ENCODE measurements at regions of chr10 and their contacts with region 1.

Region 1: GRCh38 chr10:93115661-93116383 is 42.1 kb downstream of the CYP26A1 start:
- DNase-seq: peak; percentile 20
- H3K4me3 ChIP-seq: no peak overlapping the region
- H3K27ac ChIP-seq: no peak overlapping the region
- H3K4me1 ChIP-seq: no peaks in the 10 kb centered on the region
- H3K27me3 ChIP-seq: no peaks in the 10 kb centered on the region
- CTCF ChIP-seq: peak; percentile 41 to 59

Region 2: DNA sequence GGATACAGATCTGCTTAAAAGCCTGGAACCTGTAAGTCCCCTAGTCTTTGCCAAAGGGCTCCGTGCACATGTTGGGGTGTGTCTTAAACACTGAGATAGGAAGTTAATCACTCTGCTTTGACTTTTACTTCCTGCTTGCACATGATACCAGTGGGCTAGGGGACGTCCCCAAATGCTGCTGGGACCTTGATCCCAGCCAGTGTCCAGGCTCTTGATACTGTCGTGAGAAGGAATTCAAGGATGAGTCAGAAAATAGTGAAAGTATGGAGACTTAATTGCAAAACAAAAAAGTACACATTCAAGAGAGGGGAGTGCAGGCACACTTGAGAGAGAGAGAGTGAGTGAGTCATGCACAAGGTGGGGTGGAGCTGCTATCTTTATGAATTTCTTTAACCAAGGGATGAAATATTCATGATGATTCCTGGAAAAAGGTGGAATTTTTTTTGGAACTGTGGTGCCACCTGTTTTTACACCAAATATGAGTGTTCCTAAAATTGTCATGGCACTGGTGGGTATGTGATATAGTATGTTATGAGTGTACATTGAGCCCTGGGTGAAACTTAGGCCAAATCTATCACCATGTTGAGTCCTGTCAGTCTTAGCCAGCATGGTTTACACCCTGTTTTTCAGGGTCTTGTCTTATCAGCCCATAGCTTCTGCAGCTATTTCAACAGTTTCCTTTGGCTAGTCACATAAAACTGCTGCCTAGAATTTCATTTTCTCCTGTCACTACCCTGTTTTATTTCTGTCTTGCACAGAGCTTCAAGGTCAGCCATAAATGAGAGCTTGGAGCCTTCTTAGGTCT is 143.6 kb before region 1 on chr10:
- CTCF ChIA-PET with region 1: no interaction called
- dilution Hi-C with region 1: no loop called
- in situ Hi-C with region 1: no loop called
- intact Hi-C with region 1: no loop called
- DNase-seq: peak; percentile 87
- H3K4me3 ChIP-seq: no peak overlapping the region
- H3K27ac ChIP-seq: peak overlapping the region; percentile 48
- H3K4me1 ChIP-seq: peaks cover 15% of the 10 kb centered on the region
- H3K27me3 ChIP-seq: no peaks in the 10 kb centered on the region
- CTCF ChIP-seq: no peak

Region 3: GRCh38 chr10:93080350-93081046 is 35.3 kb before region 1 on chr10:
- CTCF ChIA-PET with region 1: no interaction called
- dilution Hi-C with region 1: no loop called
- in situ Hi-C with region 1: no loop called
- intact Hi-C with region 1: no loop called
- DNase-seq: no peak
- H3K4me3 ChIP-seq: no peak overlapping the region
- H3K27ac ChIP-seq: no peak overlapping the region
- H3K4me1 ChIP-seq: no peaks in the 10 kb centered on the region
- H3K27me3 ChIP-seq: peaks cover 2% of the 10 kb centered on the region
- CTCF ChIP-seq: peak; percentile 67 to 92

Region 4: DNA sequence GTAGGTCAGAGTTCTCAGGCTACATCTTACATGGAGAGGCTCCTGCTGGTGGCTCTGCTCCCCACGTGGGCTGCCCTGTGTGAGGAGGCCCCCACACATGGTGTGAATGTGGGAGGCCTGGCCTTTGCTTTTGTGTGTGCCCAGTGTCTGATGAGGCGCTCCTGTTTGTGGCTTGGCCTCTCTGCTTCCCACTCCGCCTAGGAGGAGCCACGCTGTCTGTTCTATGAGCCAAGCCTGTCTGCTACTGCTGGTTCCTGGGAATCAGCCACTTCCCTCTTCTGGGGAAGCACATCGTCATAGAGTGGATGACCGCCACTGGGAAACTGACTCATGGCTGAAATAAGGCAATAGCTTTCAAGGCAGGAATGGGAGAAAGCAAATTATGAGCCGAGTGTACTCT is 45.0 kb after region 1 on chr10:
- CTCF ChIA-PET with region 1: no interaction called
- dilution Hi-C with region 1: loop called (anchors 5 kb)
- in situ Hi-C with region 1: no loop called
- intact Hi-C with region 1: no loop called
- DNase-seq: peak; percentile 41
- H3K4me3 ChIP-seq: no peak overlapping the region
- H3K27ac ChIP-seq: no peak overlapping the region
- H3K4me1 ChIP-seq: no peaks in the 10 kb centered on the region
- H3K27me3 ChIP-seq: no peaks in the 10 kb centered on the region
- CTCF ChIP-seq: no peak

Region 5: GRCh38 chr10:93224005-93224779 is 108.4 kb after region 1 on chr10:
- CTCF ChIA-PET with region 1: no interaction called
- dilution Hi-C with region 1: no loop called
- in situ Hi-C with region 1: no loop called
- intact Hi-C with region 1: loop called (anchors 1 kb)
- DNase-seq: no peak
- H3K4me3 ChIP-seq: no peak overlapping the region
- H3K27ac ChIP-seq: no peak overlapping the region
- H3K4me1 ChIP-seq: no peaks in the 10 kb centered on the region
- H3K27me3 ChIP-seq: no peaks in the 10 kb centered on the region
- CTCF ChIP-seq: peak; percentile 19 to 51

Region 6: GRCh38 chr10:93503075-93503474 is 387.3 kb after region 1 on chr10:
- CTCF ChIA-PET with region 1: no interaction called
- dilution Hi-C with region 1: loop called (anchors 25 kb)
- in situ Hi-C with region 1: no loop called
- intact Hi-C with region 1: no loop called
- DNase-seq: no peak
- H3K4me3 ChIP-seq: no peak overlapping the region
- H3K27ac ChIP-seq: no peak overlapping the region
- H3K4me1 ChIP-seq: peaks cover 4% of the 10 kb centered on the region
- H3K27me3 ChIP-seq: no peaks in the 10 kb centered on the region
- CTCF ChIP-seq: no peak